ENCODE measurements at regions of chr14 and their contacts with region 1.

Region 1: DNA sequence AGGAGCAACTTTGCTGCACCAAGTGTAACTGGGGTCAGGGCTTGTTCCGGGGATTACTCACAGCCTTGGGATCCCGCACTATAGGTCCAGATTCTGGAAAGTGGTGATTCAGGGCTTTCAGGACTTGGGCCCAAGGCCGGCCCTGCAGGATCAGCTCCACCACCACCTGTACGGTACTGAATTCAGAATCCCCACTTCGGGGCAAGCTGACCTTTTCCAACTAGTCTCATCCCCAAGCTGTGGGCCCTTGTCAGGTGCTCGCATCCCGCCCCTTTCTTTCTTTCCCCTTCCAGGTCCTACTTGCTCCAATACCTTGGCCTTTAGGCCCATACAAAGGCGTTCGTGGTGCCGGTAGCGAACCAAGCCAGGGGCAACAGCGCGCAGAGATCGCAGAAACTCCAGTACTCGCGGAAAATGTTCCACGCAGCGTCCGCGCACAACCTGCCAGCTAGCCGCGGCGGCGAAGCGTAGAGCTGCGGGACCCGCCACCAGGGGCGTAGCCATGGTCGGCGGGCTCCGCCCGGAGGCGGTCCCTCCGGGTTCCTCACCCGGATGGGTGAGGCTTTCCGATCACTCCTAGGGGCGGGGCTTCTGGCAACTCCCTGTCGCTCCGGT is 487 bp downstream of the TINF2 start:
- DNase-seq: peak in 9 of 10 donors; percentile 89 to 97 (median 92)
- ATAC-seq: peak; percentile 83 to 84
- H3K4me3 Mint-ChIP-seq: peak overlapping the region; percentile 83 to 99 (median 97)
- H3K27ac Mint-ChIP-seq: peak overlapping the region; percentile 96 to 100 (median 100)
- H3K4me1 Mint-ChIP-seq: peaks cover 32 to 76% (median 65%) of the 10 kb centered on the region in 4 donors
- H3K27me3 Mint-ChIP-seq: no peaks in the 10 kb centered on the region

Region 2: DNA sequence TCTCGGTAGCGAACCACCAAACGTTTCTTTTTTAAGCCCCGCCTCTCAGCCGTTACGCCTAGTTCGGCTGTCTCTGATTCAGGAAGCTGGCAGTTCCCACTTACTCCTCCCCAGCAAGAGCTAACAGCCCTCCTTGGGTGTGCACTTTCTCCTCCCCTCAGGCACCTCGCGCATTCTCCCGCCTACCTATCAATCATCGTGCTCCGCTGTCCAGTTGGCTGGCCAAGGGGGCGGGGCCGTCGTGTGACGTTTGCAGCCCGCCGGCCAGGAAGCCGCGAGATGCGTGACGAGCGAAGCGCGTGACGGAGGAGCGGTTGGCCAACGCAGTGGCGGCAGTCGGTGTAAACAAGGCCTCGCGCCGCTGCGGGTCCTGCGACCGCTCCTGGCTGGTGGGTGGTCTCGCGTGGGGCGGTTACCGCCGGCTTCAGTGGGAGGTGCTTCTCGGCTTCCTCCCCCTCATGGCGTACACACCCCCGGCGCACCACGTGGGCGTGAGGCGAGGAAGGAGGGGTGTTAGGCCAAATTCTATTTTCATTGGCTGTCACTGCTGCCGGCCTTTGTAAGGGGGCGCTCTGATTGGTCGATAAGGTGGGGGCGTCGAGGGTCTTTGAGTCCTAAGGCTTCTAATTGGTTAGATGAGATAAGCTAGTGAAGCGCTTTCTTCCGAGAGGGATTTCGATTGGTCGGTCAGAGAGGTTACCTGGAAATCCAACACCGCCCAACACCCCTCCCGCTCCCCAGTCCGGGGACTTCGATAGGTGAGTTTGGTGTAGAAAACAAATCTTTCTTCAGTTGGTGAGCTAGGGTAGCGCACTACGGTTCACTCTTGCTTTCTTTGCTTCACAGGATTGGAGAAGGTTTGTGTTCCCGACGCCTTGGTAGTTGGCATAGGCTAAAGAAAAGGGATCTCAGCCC is 127.1 kb before region 1 on chr14 and contains the starts of genes DCAF11 and NRL:
- POLR2A ChIA-PET with region 1: interaction called, 21 read pairs
- DNase-seq: peak; percentile 96 to 100 (median 99)
- ATAC-seq: peak; percentile 84
- H3K4me3 Mint-ChIP-seq: peak within 1 kb of the TSS; percentile 89 to 99 (median 98)
- H3K27ac Mint-ChIP-seq: peak within 1 kb of the TSS; percentile 95 to 100 (median 99)
- H3K4me1 Mint-ChIP-seq: peaks cover 22 to 39% (median 37%) of the 10 kb centered on the region in 4 donors
- H3K27me3 Mint-ChIP-seq: peaks cover 0 to 4% (median 0%) of the 10 kb centered on the region in 5 donors
- polyA plus RNA-seq, gene DCAF11: 68.0 to 83.8 (median 71.9) TPM
- polyA plus RNA-seq, gene NRL: 3.0 to 3.5 (median 3.1) TPM

Region 3: DNA sequence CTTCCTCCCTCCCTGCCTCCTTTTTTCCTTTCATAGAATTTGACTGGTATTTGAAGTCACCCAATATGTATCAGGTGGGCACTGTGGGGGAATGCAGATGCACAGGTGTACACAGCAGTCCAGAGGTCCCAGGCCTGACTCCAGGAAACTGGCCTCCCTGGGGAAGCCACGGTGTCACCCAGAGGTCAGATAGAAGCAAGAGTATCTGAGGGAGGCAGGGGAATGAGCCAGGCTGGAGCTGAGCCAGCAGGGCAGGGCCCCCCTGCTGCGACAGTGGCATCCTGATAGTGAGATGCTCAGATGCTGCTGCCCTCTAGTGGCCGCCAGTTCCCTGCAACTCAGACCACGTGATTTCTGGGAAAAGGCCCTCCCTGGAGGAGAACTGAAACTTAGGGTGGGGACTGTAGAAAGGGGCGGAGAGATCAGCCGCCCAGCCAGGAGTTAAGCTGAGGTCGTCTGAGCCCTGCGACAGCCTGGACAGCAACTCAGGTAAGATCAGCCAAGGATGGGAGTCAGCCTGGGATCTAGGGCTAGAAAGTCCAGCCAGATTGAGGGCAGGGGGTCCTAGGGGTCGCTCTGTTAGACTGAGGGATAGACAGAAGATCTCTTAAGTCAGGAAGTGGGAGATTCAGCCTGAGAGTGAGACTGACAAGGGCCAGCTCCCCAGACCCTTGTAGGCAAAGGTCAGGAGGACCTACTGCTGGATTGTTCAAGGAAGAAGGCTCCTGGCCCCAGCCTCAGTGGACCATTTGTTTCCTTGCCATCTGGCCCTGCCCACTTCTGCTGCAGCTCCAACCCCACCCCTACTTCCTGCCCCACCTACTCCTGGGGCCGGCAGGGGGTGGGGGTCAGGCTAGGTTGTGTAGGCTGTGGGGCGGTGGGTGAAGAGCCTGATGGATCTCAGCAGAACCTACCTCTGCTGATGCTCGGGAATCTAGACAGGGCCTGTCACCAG is 80.8 kb before region 1 on chr14 and contains the start of gene IRF9:
- POLR2A ChIA-PET with region 1: interaction called, 14 read pairs
- DNase-seq: peak; percentile 94 to 99 (median 97)
- ATAC-seq: peak; percentile 89 to 90
- H3K4me3 Mint-ChIP-seq: peak within 1 kb of the TSS; percentile 95 to 100 (median 98)
- H3K27ac Mint-ChIP-seq: peak within 1 kb of the TSS; percentile 92 to 100 (median 99)
- H3K4me1 Mint-ChIP-seq: peaks cover 27 to 64% (median 55%) of the 10 kb centered on the region in 4 donors
- H3K27me3 Mint-ChIP-seq: peaks cover 0 to 2% (median 0%) of the 10 kb centered on the region in 5 donors
- polyA plus RNA-seq, gene IRF9: 46.6 to 68.6 (median 51.3) TPM

Region 4: DNA sequence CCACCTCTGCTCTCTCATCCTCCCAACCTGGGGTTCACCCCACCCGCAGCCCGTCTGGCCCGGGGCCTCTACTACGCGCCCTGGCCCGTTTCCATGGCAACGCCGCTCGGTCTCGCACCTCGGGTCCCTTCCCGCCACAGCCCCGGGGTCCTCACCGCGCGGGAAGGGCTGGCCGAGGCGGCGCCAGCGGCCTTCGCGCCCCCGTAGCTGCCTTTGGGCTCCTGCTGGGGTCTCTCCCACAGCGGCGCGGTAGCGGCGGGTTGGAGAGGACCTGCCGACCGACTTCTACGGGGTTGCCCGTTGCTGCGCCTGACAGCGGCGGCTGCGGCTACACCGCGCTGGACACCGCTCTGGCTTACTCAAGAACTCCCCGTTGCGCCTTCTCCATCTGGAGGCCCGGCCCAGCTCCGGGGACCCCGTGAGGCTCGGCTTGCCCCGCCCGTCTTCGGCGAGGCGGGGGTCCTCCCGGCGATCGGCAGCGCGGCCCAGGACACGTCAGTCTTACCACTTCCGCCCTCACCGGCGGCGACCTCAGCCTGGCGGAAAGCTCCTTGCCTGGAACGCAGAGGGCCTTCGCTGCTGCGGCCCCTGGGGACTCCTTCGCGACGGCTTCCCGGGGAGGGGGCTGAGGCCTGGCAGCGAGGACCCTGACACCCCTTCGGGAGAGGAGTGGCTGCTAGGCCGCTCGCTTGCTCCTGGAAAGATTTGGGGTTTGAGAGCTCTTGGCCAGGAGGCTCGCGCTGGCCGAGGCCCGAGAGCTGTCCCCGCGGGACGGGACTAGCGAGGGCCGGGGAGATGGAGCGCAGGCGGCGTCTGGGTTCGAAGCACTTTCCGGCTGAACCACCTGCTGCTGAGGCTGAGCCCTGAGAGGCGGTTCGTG is 46.5 kb before region 1 on chr14 and contains the start of gene TM9SF1:
- POLR2A ChIA-PET with region 1: interaction called, 23 read pairs
- DNase-seq: peak; percentile 81 to 95 (median 90)
- ATAC-seq: peak; percentile 87 to 88
- H3K4me3 Mint-ChIP-seq: peak within 1 kb of the TSS; percentile 84 to 98 (median 93)
- H3K27ac Mint-ChIP-seq: peak within 1 kb of the TSS; percentile 93 to 99 (median 98)
- H3K4me1 Mint-ChIP-seq: peaks cover 24 to 64% (median 62%) of the 10 kb centered on the region in 4 donors
- H3K27me3 Mint-ChIP-seq: no peaks in the 10 kb centered on the region
- polyA plus RNA-seq, gene TM9SF1: 23.1 to 29.8 (median 29.1) TPM

Region 5: DNA sequence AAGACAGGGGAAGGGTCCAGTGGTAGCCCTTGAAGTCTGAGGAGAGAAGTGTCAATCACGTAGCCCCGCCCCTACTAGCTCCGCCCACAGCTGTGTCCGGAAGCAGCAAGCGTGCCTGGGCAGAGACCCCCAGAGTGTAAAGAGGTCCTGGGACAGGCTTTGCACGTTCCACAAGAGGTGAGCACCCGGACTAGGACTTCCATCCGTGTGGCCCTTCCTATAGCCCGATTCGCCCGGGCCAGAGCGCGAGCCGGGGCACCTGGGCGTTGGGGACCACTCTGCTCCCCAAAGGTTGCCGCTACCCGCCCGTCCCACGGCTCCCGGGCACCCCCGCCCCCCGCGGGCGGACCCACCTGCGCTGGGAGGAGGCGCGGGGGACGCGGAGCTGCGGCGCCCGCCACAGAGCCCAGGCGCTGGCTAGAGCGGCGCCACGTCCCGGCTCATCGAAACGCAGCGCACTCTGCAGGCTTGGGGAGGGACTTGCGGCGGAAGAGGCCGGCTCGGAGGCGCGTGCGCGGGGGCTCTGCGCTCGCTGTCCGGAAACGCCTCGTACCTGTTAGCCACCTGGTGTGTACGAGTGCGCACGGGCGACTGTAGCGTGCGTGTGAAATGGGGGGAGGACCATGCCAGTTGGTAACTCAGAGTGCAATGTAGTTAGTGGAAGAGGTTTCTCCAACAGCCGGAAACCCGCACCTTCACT is 29.3 kb after region 1 on chr14 and contains the start of gene RABGGTA:
- POLR2A ChIA-PET with region 1: interaction called, 63 read pairs
- DNase-seq: peak; percentile 87 to 98 (median 94)
- ATAC-seq: peak; percentile 86 to 91
- H3K4me3 Mint-ChIP-seq: peak within 1 kb of the TSS; percentile 78 to 94 (median 92)
- H3K27ac Mint-ChIP-seq: peak within 1 kb of the TSS; percentile 92 to 100 (median 99)
- H3K4me1 Mint-ChIP-seq: peaks cover 31 to 45% (median 41%) of the 10 kb centered on the region in 4 donors
- H3K27me3 Mint-ChIP-seq: no peaks in the 10 kb centered on the region
- polyA plus RNA-seq, gene RABGGTA: 12.7 to 22.1 (median 20.4) TPM

Region 6: GRCh38 chr14:24310646-24311604 is 69.0 kb after region 1 on chr14 and contains the start of gene LTB4R:
- POLR2A ChIA-PET with region 1: interaction called, 67 read pairs
- DNase-seq: peak; percentile 53 to 82 (median 67)
- ATAC-seq: peak; percentile 85 to 87
- H3K4me3 Mint-ChIP-seq: peak within 1 kb of the TSS; percentile 77 to 87 (median 82)
- H3K27ac Mint-ChIP-seq: peak within 1 kb of the TSS; percentile 82 to 95 (median 92)
- H3K4me1 Mint-ChIP-seq: peaks cover 41 to 80% (median 73%) of the 10 kb centered on the region in 4 donors
- H3K27me3 Mint-ChIP-seq: no peaks in the 10 kb centered on the region
- polyA plus RNA-seq, gene LTB4R: 3.4 to 5.9 (median 4.5) TPM

Region 7: GRCh38 chr14:24431569-24432258 is 189.8 kb after region 1 on chr14:
- POLR2A ChIA-PET with region 1: interaction called, 44 read pairs
- DNase-seq: peak; percentile 79 to 94 (median 86)
- ATAC-seq: peak; percentile 53 to 58
- H3K4me3 Mint-ChIP-seq: peak overlapping the region; percentile 85 to 94 (median 90)
- H3K27ac Mint-ChIP-seq: peak overlapping the region; percentile 88 to 98 (median 96)
- H3K4me1 Mint-ChIP-seq: peaks cover 26 to 58% (median 49%) of the 10 kb centered on the region in 4 donors
- H3K27me3 Mint-ChIP-seq: no peaks in the 10 kb centered on the region